Endothelial cell of umbilical vein (primary cell): ENCODE measurements at regions of chr10 and their contacts with region 1.

Region 1: GRCh38 chr10:127826154-127826725 is 66.5 kb downstream of the CLRN3 start:
- DNase-seq: no peak
- H3K4me3 ChIP-seq: no peak overlapping the region
- H3K27ac ChIP-seq: no peak overlapping the region
- H3K4me1 ChIP-seq: no peaks in the 10 kb centered on the region
- H3K27me3 ChIP-seq: no peaks in the 10 kb centered on the region
- CTCF ChIP-seq: no peak
- POLR2A ChIP-seq: no peak

Region 2: DNA sequence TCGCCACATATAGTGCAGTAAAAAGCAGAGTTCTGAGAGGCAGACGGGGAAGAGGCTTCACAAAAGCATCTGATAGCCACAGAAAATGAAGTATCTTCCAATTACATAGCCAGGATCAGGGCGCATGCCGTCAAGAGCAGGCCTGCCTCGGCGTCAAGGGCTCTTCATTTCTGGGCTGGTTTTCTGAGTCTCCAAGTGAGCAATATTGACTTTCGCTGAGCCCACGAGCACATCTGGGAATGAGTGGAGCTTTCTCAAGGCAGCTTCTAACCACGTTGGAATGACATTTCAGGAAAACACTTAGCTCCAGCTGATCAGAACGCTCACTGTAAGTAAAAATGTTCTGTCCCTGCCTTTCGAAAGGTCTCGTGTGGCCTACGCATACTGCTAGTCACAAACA is 14.6 kb after region 1 on chr10:
- CTCF ChIA-PET with region 1: no interaction called
- POLR2A ChIA-PET with region 1: no interaction called
- dilution Hi-C with region 1: no loop called
- intact Hi-C with region 1: loop called (anchors 1 kb)
- DNase-seq: no peak
- H3K4me3 ChIP-seq: no peak overlapping the region
- H3K27ac ChIP-seq: no peak overlapping the region
- H3K4me1 ChIP-seq: no peaks in the 10 kb centered on the region
- H3K27me3 ChIP-seq: no peaks in the 10 kb centered on the region
- CTCF ChIP-seq: no peak
- POLR2A ChIP-seq: no peak